MCF 10A (cell line): ENCODE measurements at regions of chr2 and their contacts with region 1.

Region 1: GRCh38 chr2:20411361-20411894 is 35.4 kb upstream of the RHOB start:
- DNase-seq: peak; percentile 88
- H3K4me3 Mint-ChIP-seq: no peak overlapping the region
- H3K27ac Mint-ChIP-seq: no peak overlapping the region
- H3K4me1 Mint-ChIP-seq: peaks cover 23% of the 10 kb centered on the region
- H3K27me3 Mint-ChIP-seq: no peaks in the 10 kb centered on the region
- CTCF ChIP-seq: peak; percentile 74

Region 2: DNA sequence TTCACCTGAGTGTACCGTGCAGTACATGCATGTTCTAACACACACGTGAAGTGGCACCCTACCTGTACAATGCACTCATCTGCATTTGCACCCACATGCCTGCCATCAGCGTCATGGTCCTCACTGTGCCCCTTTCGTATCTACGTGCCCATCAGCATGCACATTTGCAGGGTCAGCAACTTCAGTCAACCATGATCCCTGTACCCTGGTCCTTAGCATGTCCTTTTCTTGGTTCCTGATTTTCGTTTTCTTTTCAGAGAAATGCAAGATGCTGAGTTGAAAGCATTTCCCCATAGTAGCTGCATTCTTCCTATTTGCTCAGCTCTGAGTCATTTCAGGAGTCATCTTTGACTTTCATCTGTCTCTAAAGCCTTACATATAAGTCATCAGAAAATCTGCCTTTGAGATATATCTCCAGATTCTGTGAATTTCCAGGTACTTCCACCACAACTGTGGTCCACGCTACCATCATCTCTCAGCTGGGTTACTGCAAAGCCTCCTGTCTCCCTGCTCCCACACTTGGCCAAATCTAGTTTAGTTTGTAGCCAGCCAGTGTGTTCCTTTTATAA is 46.1 kb before region 1 on chr2:
- CTCF ChIA-PET with region 1: interaction called, 13 read pairs
- POLR2A ChIA-PET with region 1: interaction called, 4 read pairs
- intact Hi-C with region 1: no loop called
- DNase-seq: peak; percentile 53
- H3K4me3 Mint-ChIP-seq: no peak overlapping the region
- H3K27ac Mint-ChIP-seq: no peak overlapping the region
- H3K4me1 Mint-ChIP-seq: peaks cover 33% of the 10 kb centered on the region
- H3K27me3 Mint-ChIP-seq: no peaks in the 10 kb centered on the region
- CTCF ChIP-seq: no peak

Region 3: GRCh38 chr2:20398956-20399567 is 12.4 kb before region 1 on chr2:
- CTCF ChIA-PET with region 1: interaction called, 48 read pairs
- POLR2A ChIA-PET with region 1: interaction called, 4 read pairs
- intact Hi-C with region 1: no loop called
- DNase-seq: no peak
- H3K4me3 Mint-ChIP-seq: no peak overlapping the region
- H3K27ac Mint-ChIP-seq: no peak overlapping the region
- H3K4me1 Mint-ChIP-seq: peaks cover 25% of the 10 kb centered on the region
- H3K27me3 Mint-ChIP-seq: no peaks in the 10 kb centered on the region
- CTCF ChIP-seq: no peak

Region 4: GRCh38 chr2:20438334-20439192 is 27.1 kb after region 1 on chr2:
- CTCF ChIA-PET with region 1: interaction called, 275 read pairs
- POLR2A ChIA-PET with region 1: interaction called, 23 read pairs
- intact Hi-C with region 1: loop called (anchors 2 kb)
- DNase-seq: peak; percentile 89
- H3K4me3 Mint-ChIP-seq: peak overlapping the region; percentile 66
- H3K27ac Mint-ChIP-seq: peak overlapping the region; percentile 82
- H3K4me1 Mint-ChIP-seq: peaks cover 26% of the 10 kb centered on the region
- H3K27me3 Mint-ChIP-seq: no peaks in the 10 kb centered on the region
- CTCF ChIP-seq: no peak

Region 5: GRCh38 chr2:20562540-20563225 is 151.3 kb after region 1 on chr2:
- CTCF ChIA-PET with region 1: no interaction called
- POLR2A ChIA-PET with region 1: no interaction called
- intact Hi-C with region 1: no loop called
- DNase-seq: no peak
- H3K4me3 Mint-ChIP-seq: no peak overlapping the region
- H3K27ac Mint-ChIP-seq: no peak overlapping the region
- H3K4me1 Mint-ChIP-seq: peaks cover 17% of the 10 kb centered on the region
- H3K27me3 Mint-ChIP-seq: no peaks in the 10 kb centered on the region
- CTCF ChIP-seq: no peak

Region 6: DNA sequence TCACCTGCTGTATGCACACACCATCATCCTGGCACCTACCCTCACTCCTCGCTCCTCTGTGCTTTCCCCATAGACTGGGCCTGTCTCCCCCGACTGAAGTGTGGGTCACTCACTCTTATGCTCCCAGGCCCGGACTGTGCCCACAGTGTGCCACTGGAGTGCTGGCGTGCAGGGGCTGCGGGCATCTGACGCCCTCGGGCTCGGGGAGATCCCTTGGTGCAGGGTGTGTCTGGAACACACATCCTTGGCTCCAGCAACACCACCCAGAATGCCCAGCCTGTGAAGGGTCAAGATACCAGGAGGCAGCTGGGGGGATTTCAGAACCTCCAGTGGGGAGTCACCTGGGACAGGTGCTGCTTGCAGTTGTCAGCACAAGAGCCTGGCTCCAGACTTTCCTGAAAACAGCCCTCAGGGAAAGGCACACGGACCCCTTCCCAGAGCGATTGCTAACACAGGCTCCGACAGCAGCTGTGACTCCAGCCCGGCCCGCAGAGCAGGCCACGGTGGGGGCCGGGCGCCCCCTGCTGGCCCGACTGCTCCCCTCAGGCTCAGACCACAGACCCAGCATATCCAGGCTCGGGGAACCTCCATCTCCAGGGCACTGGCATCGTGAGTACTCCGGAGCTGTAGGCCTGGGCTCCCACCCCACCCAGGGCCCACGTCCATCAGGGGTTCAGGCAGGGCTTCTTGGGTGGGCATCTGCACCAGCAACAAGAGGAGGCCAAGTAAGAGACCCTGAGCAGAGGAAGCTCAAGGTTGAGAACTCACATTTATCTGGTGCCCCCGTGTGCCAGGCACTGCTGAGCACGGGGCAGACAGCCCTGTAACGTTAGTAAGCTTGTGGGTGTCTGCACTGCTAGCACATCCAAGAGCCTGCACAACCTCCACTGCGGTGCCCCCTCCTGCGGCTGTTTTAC is 230.9 kb after region 1 on chr2:
- CTCF ChIA-PET with region 1: interaction called, 71 read pairs
- POLR2A ChIA-PET with region 1: interaction called, 3 read pairs
- intact Hi-C with region 1: no loop called
- DNase-seq: peak; percentile 70
- H3K4me3 Mint-ChIP-seq: no peak overlapping the region
- H3K27ac Mint-ChIP-seq: no peak overlapping the region
- H3K4me1 Mint-ChIP-seq: peaks cover 17% of the 10 kb centered on the region
- H3K27me3 Mint-ChIP-seq: no peaks in the 10 kb centered on the region
- CTCF ChIP-seq: peak; percentile 91

Region 7: GRCh38 chr2:21372654-21373053 is 961.2 kb after region 1 on chr2:
- CTCF ChIA-PET with region 1: no interaction called
- POLR2A ChIA-PET with region 1: no interaction called
- intact Hi-C with region 1: no loop called
- DNase-seq: peak; percentile 43
- H3K4me3 Mint-ChIP-seq: no peak overlapping the region
- H3K27ac Mint-ChIP-seq: no peak overlapping the region
- H3K4me1 Mint-ChIP-seq: no peaks in the 10 kb centered on the region
- H3K27me3 Mint-ChIP-seq: no peaks in the 10 kb centered on the region
- CTCF ChIP-seq: peak; percentile 46